B cell (primary cell): ENCODE measurements at regions of chr12 and their contacts with region 1.

Region 1: GRCh38 chr12:109597795-109598427 is 24.3 kb downstream of the MVK start:
- DNase-seq: peak; percentile 69
- ATAC-seq: peak; percentile 78
- H3K4me3 ChIP-seq: no peak overlapping the region
- H3K4me3 Mint-ChIP-seq: no peak overlapping the region
- H3K27ac ChIP-seq: no peak overlapping the region
- H3K27ac Mint-ChIP-seq: no peak overlapping the region
- H3K4me1 ChIP-seq: peaks cover 4 to 6% of the 10 kb centered on the region in 2 donors
- H3K4me1 Mint-ChIP-seq: peaks cover 11% of the 10 kb centered on the region
- H3K27me3 ChIP-seq: no peaks in the 10 kb centered on the region
- H3K27me3 Mint-ChIP-seq: no peaks in the 10 kb centered on the region
- CTCF ChIP-seq: peak; percentile 89

Region 2: GRCh38 chr12:109573029-109573913 is 24.6 kb before region 1 on chr12 and contains the starts of genes MMAB and MVK:
- CTCF ChIA-PET with region 1: interaction called, 11 read pairs
- POLR2A ChIA-PET with region 1: no interaction called
- intact Hi-C with region 1: no loop called
- DNase-seq: peak; percentile 99
- ATAC-seq: peak; percentile 96
- H3K4me3 ChIP-seq: peak within 1 kb of the TSS; percentile 44 to 87 (median 72)
- H3K4me3 Mint-ChIP-seq: peak within 1 kb of the TSS; percentile 96
- H3K27ac ChIP-seq: peak within 1 kb of the TSS; percentile 89 to 98
- H3K27ac Mint-ChIP-seq: peak within 1 kb of the TSS; percentile 94
- H3K4me1 ChIP-seq: peaks cover 14 to 23% of the 10 kb centered on the region in 2 donors
- H3K4me1 Mint-ChIP-seq: peaks cover 29% of the 10 kb centered on the region
- H3K27me3 ChIP-seq: no peaks in the 10 kb centered on the region
- H3K27me3 Mint-ChIP-seq: no peaks in the 10 kb centered on the region
- CTCF ChIP-seq: no peak
- total RNA-seq, gene MMAB: 20.5 and 24.6 TPM in 2 replicates
- total RNA-seq, gene MVK: 12.5 and 15.6 TPM in 2 replicates

Region 3: DNA sequence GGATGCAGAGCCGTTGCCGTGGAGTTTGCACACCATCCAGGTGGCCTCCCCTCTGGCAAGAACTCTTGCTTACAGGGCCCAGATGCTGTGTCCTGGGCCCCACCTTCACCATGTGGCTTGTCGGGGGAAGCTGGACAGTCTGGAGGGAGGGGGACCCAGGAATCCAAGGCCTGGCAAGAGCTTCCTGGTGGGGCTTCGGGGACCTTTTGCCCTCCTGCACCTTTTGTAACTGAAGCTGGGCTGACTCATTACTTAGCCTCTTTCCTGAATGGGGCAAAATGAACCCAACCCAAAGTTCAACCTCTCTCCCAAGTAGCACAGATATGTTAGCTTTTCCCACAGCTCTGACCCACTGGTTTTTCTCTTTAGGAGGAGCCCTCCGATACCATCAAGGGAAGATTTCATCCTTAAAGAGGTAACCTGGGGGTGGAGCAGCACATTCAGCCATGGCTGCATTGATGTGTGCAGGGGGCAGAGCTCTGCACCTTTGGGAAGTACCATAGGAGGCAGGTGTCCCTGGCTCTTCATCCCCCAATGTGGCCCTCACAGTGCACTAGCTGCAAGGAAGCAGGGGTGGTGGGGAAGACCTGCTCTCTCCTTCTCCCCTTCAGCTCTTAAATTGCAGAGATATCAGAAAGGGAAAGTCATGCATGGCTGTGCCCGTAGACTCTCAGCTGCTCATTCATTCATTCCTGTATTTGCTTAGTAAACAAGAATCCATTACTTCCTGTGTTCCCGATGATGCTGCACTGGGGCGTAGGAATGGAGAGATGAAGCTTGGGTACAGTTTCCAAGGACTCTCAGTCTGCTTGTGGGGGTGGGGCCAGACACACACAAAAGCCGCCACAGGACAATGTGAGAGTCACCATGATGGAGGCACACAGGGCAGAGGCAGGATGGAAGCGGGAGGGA is 11.3 kb before region 1 on chr12:
- CTCF ChIA-PET with region 1: interaction called, 10 read pairs
- POLR2A ChIA-PET with region 1: no interaction called
- intact Hi-C with region 1: no loop called
- DNase-seq: no peak
- ATAC-seq: no peak
- H3K4me3 ChIP-seq: no peak overlapping the region
- H3K4me3 Mint-ChIP-seq: no peak overlapping the region
- H3K27ac ChIP-seq: no peak overlapping the region
- H3K27ac Mint-ChIP-seq: no peak overlapping the region
- H3K4me1 ChIP-seq: no peaks in the 10 kb centered on the region
- H3K4me1 Mint-ChIP-seq: no peaks in the 10 kb centered on the region
- H3K27me3 ChIP-seq: no peaks in the 10 kb centered on the region
- H3K27me3 Mint-ChIP-seq: no peaks in the 10 kb centered on the region
- CTCF ChIP-seq: no peak

Region 4: DNA sequence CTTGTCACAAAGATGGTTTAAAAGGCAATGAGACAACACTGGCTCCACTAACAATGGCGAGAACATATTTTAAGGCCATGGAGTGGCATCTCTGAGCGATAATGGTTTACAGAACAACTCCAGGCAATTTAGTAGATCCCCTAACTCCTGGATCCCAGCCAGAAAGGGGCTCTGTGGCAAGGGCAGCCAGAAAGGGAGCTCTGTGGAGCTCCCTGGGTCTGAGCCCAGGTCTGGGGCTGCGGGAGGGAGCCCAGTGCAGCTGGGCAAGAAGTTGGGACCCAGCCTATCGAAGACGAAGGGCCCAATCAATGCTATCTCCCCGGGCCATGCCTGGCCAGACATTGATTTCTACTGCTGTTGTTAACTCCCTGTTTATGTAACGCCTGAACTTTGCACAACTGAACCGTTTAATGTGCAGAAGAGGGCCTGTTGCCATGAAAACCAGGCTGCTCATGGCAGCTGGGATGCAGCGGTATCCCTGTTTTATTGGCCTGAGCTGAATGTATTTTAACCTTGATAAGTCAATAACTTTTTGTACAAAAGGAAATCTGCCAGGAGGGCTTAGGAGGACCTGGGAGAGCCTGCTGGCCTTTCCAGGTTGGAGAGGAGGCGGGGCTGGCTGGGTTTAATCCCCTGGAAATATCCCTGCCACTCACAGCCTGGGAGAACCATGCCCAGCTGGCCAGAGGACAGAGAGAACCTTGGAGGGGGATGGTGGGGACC is 109.0 kb after region 1 on chr12:
- CTCF ChIA-PET with region 1: no interaction called
- POLR2A ChIA-PET with region 1: no interaction called
- intact Hi-C with region 1: no loop called
- DNase-seq: no peak
- ATAC-seq: no peak
- H3K4me3 ChIP-seq: no peak overlapping the region
- H3K4me3 Mint-ChIP-seq: no peak overlapping the region
- H3K27ac ChIP-seq: no peak overlapping the region
- H3K27ac Mint-ChIP-seq: no peak overlapping the region
- H3K4me1 ChIP-seq: peaks cover 0 to under 1% of the 10 kb centered on the region in 2 donors
- H3K4me1 Mint-ChIP-seq: no peaks in the 10 kb centered on the region
- H3K27me3 ChIP-seq: peaks cover 0 to 41% (median 8%) of the 10 kb centered on the region in 4 experiments
- H3K27me3 Mint-ChIP-seq: peaks cover 48% of the 10 kb centered on the region
- CTCF ChIP-seq: no peak

Region 5: DNA sequence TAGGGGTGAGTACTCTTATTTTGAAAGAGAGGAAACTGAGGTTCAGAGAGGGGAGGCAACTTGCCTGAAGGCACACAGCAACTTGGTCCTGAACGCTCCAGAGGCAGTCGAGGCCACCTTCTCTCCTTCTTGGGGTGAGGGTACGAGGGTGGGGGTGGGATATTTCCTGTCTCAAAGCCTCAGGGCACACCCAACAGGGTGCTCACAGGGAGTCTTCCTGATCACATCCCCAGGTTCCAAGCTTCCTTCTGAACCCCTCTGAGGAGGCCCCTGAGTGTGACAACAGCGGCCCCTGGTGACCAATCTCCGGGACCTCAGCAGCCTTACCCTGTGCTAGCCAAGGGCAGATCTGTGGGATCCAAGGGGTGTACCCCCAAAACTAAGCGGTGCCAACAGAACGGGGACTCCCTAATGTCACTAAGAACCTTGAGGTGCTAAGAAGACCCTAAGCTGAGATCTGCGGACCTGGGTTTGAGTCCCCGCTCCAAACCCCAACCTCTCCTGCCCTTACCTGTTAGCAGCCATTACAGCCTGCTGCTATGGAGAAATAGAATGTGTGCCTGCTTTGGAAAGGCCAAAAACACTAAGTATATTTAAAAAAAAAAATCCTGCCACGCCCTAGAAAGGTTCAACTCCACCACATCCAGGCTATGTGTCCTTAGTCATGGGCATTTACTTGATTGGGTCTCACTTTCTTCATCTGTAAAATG is 177.4 kb after region 1 on chr12:
- CTCF ChIA-PET with region 1: interaction called, 58 read pairs
- POLR2A ChIA-PET with region 1: no interaction called
- intact Hi-C with region 1: no loop called
- DNase-seq: peak; percentile 73
- ATAC-seq: peak; percentile 77
- H3K4me3 ChIP-seq: no peak overlapping the region
- H3K4me3 Mint-ChIP-seq: no peak overlapping the region
- H3K27ac ChIP-seq: no peak overlapping the region
- H3K27ac Mint-ChIP-seq: no peak overlapping the region
- H3K4me1 ChIP-seq: no peaks in the 10 kb centered on the region
- H3K4me1 Mint-ChIP-seq: peaks cover 6% of the 10 kb centered on the region
- H3K27me3 ChIP-seq: no peaks in the 10 kb centered on the region
- H3K27me3 Mint-ChIP-seq: peaks cover 3% of the 10 kb centered on the region
- CTCF ChIP-seq: peak; percentile 80